Caco-2 (cell line): ENCODE measurements at regions of chr20 and their contacts with region 1.

Region 1: GRCh38 chr20:54093423-54094267 is 23.3 kb upstream of the BCAS1 start:
- DNase-seq: no peak
- H3K4me3 ChIP-seq: no peak overlapping the region
- H3K4me3 Mint-ChIP-seq: no peak overlapping the region
- H3K27ac Mint-ChIP-seq: no peak overlapping the region
- H3K4me1 ChIP-seq: no peaks in the 10 kb centered on the region
- H3K4me1 Mint-ChIP-seq: peaks cover 6% of the 10 kb centered on the region
- H3K27me3 ChIP-seq: no peaks in the 10 kb centered on the region
- H3K27me3 Mint-ChIP-seq: peaks cover 3% of the 10 kb centered on the region
- CTCF ChIP-seq: no peak

Region 2: GRCh38 chr20:53883098-53883811 is 210.4 kb before region 1 on chr20:
- CTCF ChIA-PET with region 1: no interaction called
- POLR2A ChIA-PET with region 1: no interaction called
- intact Hi-C with region 1: no loop called
- DNase-seq: no peak
- H3K4me3 ChIP-seq: no peak overlapping the region
- H3K4me3 Mint-ChIP-seq: no peak overlapping the region
- H3K27ac Mint-ChIP-seq: no peak overlapping the region
- H3K4me1 ChIP-seq: peaks cover 9% of the 10 kb centered on the region
- H3K4me1 Mint-ChIP-seq: peaks cover 8% of the 10 kb centered on the region
- H3K27me3 ChIP-seq: no peaks in the 10 kb centered on the region
- H3K27me3 Mint-ChIP-seq: no peaks in the 10 kb centered on the region
- CTCF ChIP-seq: no peak

Region 3: GRCh38 chr20:54048481-54048880 is 45.2 kb before region 1 on chr20:
- CTCF ChIA-PET with region 1: no interaction called
- POLR2A ChIA-PET with region 1: no interaction called
- intact Hi-C with region 1: no loop called
- DNase-seq: no peak
- H3K4me3 ChIP-seq: no peak overlapping the region
- H3K4me3 Mint-ChIP-seq: no peak overlapping the region
- H3K27ac Mint-ChIP-seq: no peak overlapping the region
- H3K4me1 ChIP-seq: no peaks in the 10 kb centered on the region
- H3K4me1 Mint-ChIP-seq: no peaks in the 10 kb centered on the region
- H3K27me3 ChIP-seq: no peaks in the 10 kb centered on the region
- H3K27me3 Mint-ChIP-seq: peaks cover 5% of the 10 kb centered on the region
- CTCF ChIP-seq: no peak

Region 4: GRCh38 chr20:54132612-54133433 is 39.2 kb after region 1 on chr20:
- CTCF ChIA-PET with region 1: interaction called, 3 read pairs
- POLR2A ChIA-PET with region 1: no interaction called
- intact Hi-C with region 1: loop called (anchors 2 kb)
- DNase-seq: peak; percentile 65 to 81
- H3K4me3 ChIP-seq: no peak overlapping the region
- H3K4me3 Mint-ChIP-seq: no peak overlapping the region
- H3K27ac Mint-ChIP-seq: no peak overlapping the region
- H3K4me1 ChIP-seq: peaks cover 20% of the 10 kb centered on the region
- H3K4me1 Mint-ChIP-seq: peaks cover 6% of the 10 kb centered on the region
- H3K27me3 ChIP-seq: no peaks in the 10 kb centered on the region
- H3K27me3 Mint-ChIP-seq: peaks cover 2% of the 10 kb centered on the region
- CTCF ChIP-seq: no peak

Region 5: DNA sequence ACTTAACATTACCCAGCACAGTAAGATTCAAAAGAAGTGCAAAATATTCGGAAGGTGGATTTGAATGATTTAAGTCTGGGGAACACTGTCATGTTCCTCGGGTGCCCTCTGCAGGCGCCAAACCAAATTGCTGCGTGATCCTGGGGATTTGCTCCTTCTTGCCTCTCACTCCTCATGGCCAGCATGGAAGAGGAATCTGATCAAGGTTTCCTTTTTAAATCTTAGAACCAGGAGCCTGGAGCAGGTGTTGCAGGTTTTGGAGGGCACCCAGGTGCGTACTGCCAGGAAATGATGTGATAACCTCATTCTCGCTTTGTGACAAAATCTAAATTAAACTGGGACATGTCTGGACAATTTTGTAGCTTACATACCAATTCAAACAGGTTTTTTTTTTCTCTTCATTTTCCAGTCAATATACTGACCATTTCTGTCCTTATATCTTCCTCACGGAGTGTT is 106.1 kb after region 1 on chr20:
- CTCF ChIA-PET with region 1: interaction called, 84 read pairs
- POLR2A ChIA-PET with region 1: no interaction called
- intact Hi-C with region 1: loop called (anchors 1 kb)
- DNase-seq: peak; percentile 84 to 91
- H3K4me3 ChIP-seq: no peak overlapping the region
- H3K4me3 Mint-ChIP-seq: no peak overlapping the region
- H3K27ac Mint-ChIP-seq: no peak overlapping the region
- H3K4me1 ChIP-seq: peaks cover 6% of the 10 kb centered on the region; the same call in 1 of the 2 replicates
- H3K4me1 Mint-ChIP-seq: peaks cover 11% of the 10 kb centered on the region
- H3K27me3 ChIP-seq: no peaks in the 10 kb centered on the region; the same call in 1 of the 2 replicates
- H3K27me3 Mint-ChIP-seq: peaks cover 9% of the 10 kb centered on the region
- CTCF ChIP-seq: peak; percentile 99

Region 6: GRCh38 chr20:54207743-54208547 is 114.3 kb after region 1 on chr20 and contains the start of gene PFDN4:
- CTCF ChIA-PET with region 1: interaction called, 17 read pairs
- POLR2A ChIA-PET with region 1: interaction called, 3 read pairs
- intact Hi-C with region 1: no loop called
- DNase-seq: peak; percentile 96 to 99
- H3K4me3 ChIP-seq: peak within 1 kb of the TSS; percentile 93
- H3K4me3 Mint-ChIP-seq: peak within 1 kb of the TSS; percentile 70
- H3K27ac Mint-ChIP-seq: peak within 1 kb of the TSS; percentile 99
- H3K4me1 ChIP-seq: peaks cover 9% of the 10 kb centered on the region
- H3K4me1 Mint-ChIP-seq: peaks cover 6% of the 10 kb centered on the region
- H3K27me3 ChIP-seq: no peaks in the 10 kb centered on the region
- H3K27me3 Mint-ChIP-seq: no peaks in the 10 kb centered on the region
- CTCF ChIP-seq: peak; percentile 95 to 98
- total RNA-seq, gene PFDN4: 86.7 and 93.4 TPM in 2 replicates

Region 7: GRCh38 chr20:54525916-54526590 is 432.4 kb after region 1 on chr20:
- CTCF ChIA-PET with region 1: no interaction called
- POLR2A ChIA-PET with region 1: no interaction called
- intact Hi-C with region 1: loop called (anchors 10 kb)
- DNase-seq: no peak
- H3K4me3 ChIP-seq: no peak overlapping the region
- H3K4me3 Mint-ChIP-seq: no peak overlapping the region
- H3K27ac Mint-ChIP-seq: no peak overlapping the region
- H3K4me1 ChIP-seq: no peaks in the 10 kb centered on the region
- H3K4me1 Mint-ChIP-seq: no peaks in the 10 kb centered on the region
- H3K27me3 ChIP-seq: no peaks in the 10 kb centered on the region
- H3K27me3 Mint-ChIP-seq: peaks cover 28% of the 10 kb centered on the region
- CTCF ChIP-seq: no peak